ENCODE measurements at regions of chr17 and their contacts with region 1.

Region 1: DNA sequence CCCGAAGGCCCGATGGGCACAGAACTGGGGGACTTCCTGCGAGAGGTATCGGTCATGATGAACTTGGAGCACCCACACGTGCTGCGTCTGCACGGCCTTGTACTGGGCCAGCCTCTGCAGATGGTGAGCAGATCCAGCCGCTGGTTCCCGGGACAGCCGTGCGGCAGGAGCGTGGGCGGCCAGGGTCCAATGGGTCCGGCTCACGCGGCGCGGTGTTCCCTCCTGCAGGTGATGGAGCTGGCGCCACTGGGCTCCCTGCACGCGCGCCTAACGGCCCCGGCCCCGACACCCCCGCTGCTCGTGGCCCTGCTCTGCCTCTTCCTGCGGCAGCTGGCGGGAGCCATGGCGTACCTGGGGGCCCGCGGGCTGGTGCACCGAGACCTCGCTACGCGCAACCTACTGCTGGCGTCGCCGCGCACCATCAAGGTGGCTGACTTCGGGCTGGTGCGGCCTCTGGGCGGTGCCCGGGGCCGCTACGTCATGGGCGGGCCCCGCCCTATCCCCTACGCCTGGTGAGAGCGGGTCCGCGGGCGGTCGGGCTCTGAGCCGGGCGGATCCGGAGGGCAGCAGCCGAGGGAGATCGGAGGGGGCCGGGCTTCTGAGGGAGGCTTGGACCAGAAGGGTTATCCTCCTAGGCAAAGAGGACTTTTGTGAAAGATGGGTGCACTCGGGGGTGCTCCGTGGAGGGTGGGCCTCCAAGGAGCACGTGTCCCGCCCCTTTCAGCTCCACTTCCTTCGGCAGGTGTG is 3.0 kb downstream of the TNK1 start:
- DNase-seq: no peak
- H3K4me3 ChIP-seq: peak overlapping the region; percentile 26 to 55 (median 47)
- H3K27ac ChIP-seq: peak overlapping the region; percentile 20
- H3K4me1 ChIP-seq: peaks cover 0 to 4% of the 10 kb centered on the region in 2 donors
- H3K27me3 ChIP-seq: no peaks in the 10 kb centered on the region
- CTCF ChIP-seq: no peak
- POLR2A ChIP-seq: no peak

Region 2: DNA sequence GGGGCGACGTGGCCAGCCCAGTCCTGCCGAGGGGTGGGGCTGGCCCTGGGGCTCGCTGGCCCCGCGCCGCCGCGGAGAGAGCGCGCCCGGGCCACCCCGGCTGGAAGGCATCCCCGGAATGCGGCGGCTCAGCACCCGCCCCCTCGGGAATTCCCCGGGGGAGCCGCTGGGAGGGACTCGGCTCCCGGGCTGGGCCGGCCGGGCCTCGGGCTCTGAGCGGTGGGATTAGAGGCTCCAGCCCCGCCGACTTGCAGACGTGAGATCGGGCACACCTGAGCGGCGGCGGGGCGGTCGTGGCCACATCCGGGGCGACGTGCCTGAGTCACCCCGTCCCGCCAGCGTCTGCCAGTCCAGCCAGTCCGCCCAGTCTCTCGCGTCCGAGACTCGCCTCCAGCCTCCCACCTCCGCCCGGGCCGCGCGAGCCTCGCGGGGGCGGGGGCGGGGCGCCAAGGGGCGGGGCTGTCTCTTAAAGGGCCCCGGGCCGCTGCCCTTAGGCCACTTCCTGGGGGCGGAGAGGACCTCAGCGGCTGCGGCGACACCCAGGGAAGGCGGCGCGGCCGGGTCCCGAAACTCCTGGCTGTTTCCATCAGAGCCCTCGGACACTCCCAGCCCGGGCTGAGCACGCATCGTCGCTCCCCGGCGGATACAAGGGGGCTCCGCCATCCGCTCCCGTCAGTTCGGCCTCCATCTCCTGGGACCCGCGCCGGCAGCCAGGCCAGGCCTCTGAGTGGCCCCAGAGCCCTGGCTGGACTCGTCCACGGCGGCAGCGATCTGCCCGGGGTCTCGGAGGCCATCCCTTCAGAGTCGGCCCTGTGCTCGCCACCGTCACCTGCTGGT is 32.0 kb before region 1 on chr17 and contains the start of gene KCTD11:
- intact Hi-C with region 1: no loop called
- DNase-seq: peak; percentile 87 to 93
- H3K4me3 ChIP-seq: peak within 1 kb of the TSS; percentile 70 to 79 (median 72)
- H3K27ac ChIP-seq: peak within 1 kb of the TSS; percentile 98 to 99
- H3K4me1 ChIP-seq: peaks cover 0 to 12% of the 10 kb centered on the region in 2 donors
- H3K27me3 ChIP-seq: no peaks in the 10 kb centered on the region
- CTCF ChIP-seq: peak in 2 of 3 donors; percentile 65 to 78
- POLR2A ChIP-seq: no peak
- total RNA-seq, gene KCTD11: 9.1 to 11.5 (median 11.0) TPM

Region 3: GRCh38 chr17:7426896-7427489 is 43.1 kb after region 1 on chr17:
- intact Hi-C with region 1: loop called (anchors 1 kb)
- DNase-seq: no peak
- H3K4me3 ChIP-seq: no peak overlapping the region
- H3K27ac ChIP-seq: no peak overlapping the region
- H3K4me1 ChIP-seq: no peaks in the 10 kb centered on the region
- H3K27me3 ChIP-seq: no peaks in the 10 kb centered on the region
- CTCF ChIP-seq: no peak
- POLR2A ChIP-seq: no peak

Region 4: DNA sequence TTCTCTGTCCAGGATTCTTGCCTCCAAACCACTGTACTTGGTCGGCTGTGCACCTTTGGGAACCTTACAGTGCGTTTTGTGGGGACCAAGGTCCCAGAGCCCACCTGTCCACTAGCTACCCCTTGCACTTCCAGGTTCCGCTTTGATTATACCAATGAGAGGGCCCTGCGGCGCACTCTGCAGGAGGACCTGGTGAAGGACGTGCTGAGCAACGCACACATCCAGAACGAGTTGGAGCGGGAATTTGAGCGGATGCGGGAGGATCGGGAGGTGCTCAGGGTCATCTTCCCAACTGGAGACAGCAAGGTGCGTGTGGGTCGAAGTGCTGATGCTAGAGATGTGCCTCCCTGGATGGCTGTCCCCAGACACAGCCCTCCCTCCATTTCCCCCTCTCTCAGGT is 119.1 kb after region 1 on chr17:
- intact Hi-C with region 1: no loop called
- DNase-seq: no peak
- H3K4me3 ChIP-seq: no peak overlapping the region
- H3K27ac ChIP-seq: no peak overlapping the region
- H3K4me1 ChIP-seq: no peaks in the 10 kb centered on the region
- H3K27me3 ChIP-seq: no peaks in the 10 kb centered on the region
- CTCF ChIP-seq: no peak
- POLR2A ChIP-seq: no peak